ENCODE measurements at regions of chr7 and their contacts with region 1.

Region 1: GRCh38 chr7:143305423-143306070 is 10.4 kb upstream of the CLCN1 start:
- DNase-seq: peak; percentile 67 to 78 (median 77)
- H3K4me3 ChIP-seq: no peak overlapping the region
- H3K27ac ChIP-seq: peak overlapping the region in 1 of 2 experiments; percentile 27
- H3K4me1 ChIP-seq: peaks cover 23 to 62% (median 39%) of the 10 kb centered on the region in 4 experiments
- H3K27me3 ChIP-seq: no peaks in the 10 kb centered on the region

Region 2: DNA sequence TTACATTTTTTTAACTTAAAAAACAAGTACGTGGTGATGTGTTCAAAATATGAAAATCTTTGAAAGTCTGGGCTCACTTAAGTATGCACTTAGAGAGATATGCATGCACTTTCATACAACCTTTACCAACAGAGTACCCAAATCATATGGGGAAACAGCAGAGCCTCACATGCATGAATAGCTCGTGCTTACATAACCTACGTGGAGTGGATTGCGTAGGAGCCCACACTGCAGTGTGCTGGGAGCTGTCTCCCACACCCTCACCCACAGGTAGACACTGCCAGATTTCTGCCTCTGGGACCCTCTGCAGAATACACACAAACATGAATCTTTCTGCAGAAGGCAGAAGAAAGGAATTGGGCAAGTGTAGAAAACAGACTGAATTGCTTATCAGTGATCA is 10.9 kb after region 1 on chr7:
- CTCF ChIA-PET with region 1: interaction called, 16 read pairs
- POLR2A ChIA-PET with region 1: no interaction called
- DNase-seq: no peak
- H3K4me3 ChIP-seq: no peak overlapping the region
- H3K27ac ChIP-seq: no peak overlapping the region
- H3K4me1 ChIP-seq: peaks cover 6 to 26% (median 18%) of the 10 kb centered on the region in 4 experiments
- H3K27me3 ChIP-seq: no peaks in the 10 kb centered on the region

Region 3: DNA sequence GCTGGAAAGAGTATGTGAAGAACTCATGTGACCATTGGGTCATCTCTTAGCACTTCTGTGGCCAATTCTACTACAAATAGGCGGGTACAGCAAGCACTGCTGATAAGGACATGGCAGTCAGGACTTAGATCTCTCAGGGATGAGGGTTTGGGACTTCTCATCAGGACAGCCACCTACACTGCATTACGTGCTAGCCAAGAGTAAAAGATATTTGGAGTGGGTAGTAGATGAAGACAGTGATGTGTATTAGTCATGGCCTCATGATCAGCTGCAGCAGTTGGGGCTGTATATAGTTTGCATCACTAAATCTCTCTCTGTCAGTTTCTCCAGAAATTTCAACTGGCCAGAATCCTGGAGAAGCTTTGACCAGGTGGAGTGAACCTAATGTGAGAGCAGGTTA is 146.9 kb after region 1 on chr7:
- CTCF ChIA-PET with region 1: no interaction called
- POLR2A ChIA-PET with region 1: no interaction called
- DNase-seq: no peak
- H3K4me3 ChIP-seq: no peak overlapping the region
- H3K27ac ChIP-seq: no peak overlapping the region
- H3K4me1 ChIP-seq: no peaks in the 10 kb centered on the region
- H3K27me3 ChIP-seq: no peaks in the 10 kb centered on the region

Region 4: DNA sequence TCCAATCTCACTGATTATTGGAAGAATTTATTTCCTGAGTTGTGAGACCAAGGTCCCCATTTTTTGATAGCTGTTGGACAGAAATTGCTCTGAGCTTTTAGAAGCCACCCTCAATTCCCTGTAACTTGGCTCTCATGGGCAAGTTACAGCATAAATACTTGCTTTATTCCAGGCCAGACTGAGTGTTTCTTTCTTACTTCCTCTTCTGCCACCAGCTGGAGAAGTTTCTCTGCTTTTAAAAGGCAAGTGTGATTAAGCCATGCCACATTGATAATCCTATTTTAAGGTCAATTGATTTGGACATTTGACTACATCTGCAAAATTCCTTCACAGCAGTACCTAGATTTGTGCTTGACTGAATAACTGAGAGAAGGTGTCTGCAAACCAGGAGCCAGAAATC is 158.0 kb after region 1 on chr7:
- CTCF ChIA-PET with region 1: no interaction called
- POLR2A ChIA-PET with region 1: no interaction called
- DNase-seq: peak in 2 of 3 donors; percentile 39 to 55
- H3K4me3 ChIP-seq: no peak overlapping the region
- H3K27ac ChIP-seq: no peak overlapping the region
- H3K4me1 ChIP-seq: no peaks in the 10 kb centered on the region
- H3K27me3 ChIP-seq: no peaks in the 10 kb centered on the region

Measured in common myeloid progenitor, CD34-positive (primary cell).